ENCODE measurements at regions of chr15 and their contacts with region 1.

Region 1: GRCh38 chr15:40952901-40953712 is at the start of gene CHAC1:
- DNase-seq: peak; percentile 90 to 98
- H3K4me3 ChIP-seq: peak within 1 kb of the TSS; percentile 64 to 96
- H3K27ac ChIP-seq: peak within 1 kb of the TSS; percentile 80 to 88
- H3K4me1 ChIP-seq: peaks cover 7 to 35% of the 10 kb centered on the region in 2 donors
- H3K27me3 ChIP-seq: no peaks in the 10 kb centered on the region
- CTCF ChIP-seq: peak; percentile 0 to 18 (median 11)
- total RNA-seq, gene CHAC1: 28.5 TPM

Region 2: GRCh38 chr15:40941528-40942336 is 11.4 kb before region 1 on chr15:
- intact Hi-C with region 1: loop called (anchors 1 kb)
- DNase-seq: peak in 1 of 2 donors; percentile 84
- H3K4me3 ChIP-seq: peak overlapping the region; percentile 69 to 70
- H3K27ac ChIP-seq: peak overlapping the region; percentile 77 to 88
- H3K4me1 ChIP-seq: peaks cover 0 to 17% of the 10 kb centered on the region in 2 donors
- H3K27me3 ChIP-seq: no peaks in the 10 kb centered on the region
- CTCF ChIP-seq: peak in 2 of 3 experiments; percentile 32 to 94

Region 3: DNA sequence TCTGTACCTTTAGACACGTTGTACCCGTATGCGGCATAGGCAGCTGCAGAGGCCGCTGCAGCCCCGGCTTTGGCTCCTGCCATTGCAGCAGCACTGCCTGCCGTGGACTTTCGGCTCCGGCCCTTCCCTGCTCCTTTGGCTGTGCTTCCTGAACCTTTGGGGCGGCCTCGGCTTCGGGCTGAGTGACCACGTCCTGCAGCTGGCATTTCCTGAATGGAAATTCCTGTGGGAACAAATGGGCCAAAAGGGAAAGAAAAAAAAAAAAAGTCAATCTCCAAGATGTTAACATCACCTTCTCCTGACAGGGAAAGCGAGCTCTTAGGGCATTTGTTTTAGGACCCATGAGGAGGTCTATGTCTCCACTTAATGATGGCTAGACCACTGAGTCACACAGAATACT is 29.7 kb after region 1 on chr15:
- intact Hi-C with region 1: loop called (anchors 1 kb)
- DNase-seq: peak in 1 of 2 donors; percentile 91
- H3K4me3 ChIP-seq: no peak overlapping the region
- H3K27ac ChIP-seq: peak overlapping the region; percentile 82 to 94
- H3K4me1 ChIP-seq: peaks cover 17 to 49% of the 10 kb centered on the region in 2 donors
- H3K27me3 ChIP-seq: no peaks in the 10 kb centered on the region
- CTCF ChIP-seq: peak in 2 of 3 experiments; percentile 26 to 31

Measured in ascending aorta (tissue), 2 donors.